ENCODE measurements at regions of chr20 and their contacts with region 1.

Region 1: DNA sequence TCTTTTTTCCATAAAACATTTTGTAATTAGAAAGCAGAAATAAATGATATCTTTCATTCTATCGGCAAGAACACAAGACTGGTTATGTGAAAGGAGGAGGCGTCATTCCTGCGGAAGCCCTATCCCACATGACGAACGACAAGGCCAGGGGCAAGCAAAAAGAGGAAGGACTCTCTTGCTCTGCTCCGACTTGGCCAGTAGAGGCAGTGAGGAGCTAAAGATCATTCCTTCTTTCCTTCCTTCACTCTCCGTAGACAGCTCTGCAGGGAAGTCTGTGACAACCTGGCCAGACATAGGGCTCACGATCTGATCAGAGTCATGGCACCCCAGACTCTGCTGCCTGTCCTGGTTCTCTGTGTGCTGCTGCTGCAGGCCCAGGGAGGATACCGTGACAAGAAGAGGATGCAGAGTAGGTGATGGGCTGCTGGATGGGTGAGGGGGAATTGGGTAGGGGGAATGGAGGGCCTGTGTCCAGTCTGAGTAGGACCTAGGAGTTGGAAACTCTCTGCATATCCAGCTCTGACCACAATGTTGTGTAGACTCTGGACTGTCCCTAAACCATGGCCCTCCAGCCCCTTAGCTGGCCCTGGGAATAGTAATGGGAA is at the start of gene WFDC10A:
- DNase-seq: no peak
- H3K4me3 ChIP-seq: no peak within 1 kb of the TSS
- H3K27ac ChIP-seq: no peak within 1 kb of the TSS
- H3K4me1 ChIP-seq: no peaks in the 10 kb centered on the region
- H3K27me3 ChIP-seq: no peaks in the 10 kb centered on the region
- CTCF ChIP-seq: peak in 2 of 3 donors; percentile 52 to 56
- POLR2A ChIP-seq: no peak
- total RNA-seq, gene WFDC10A: not detected

Region 2: GRCh38 chr20:45378191-45378590 is 251.4 kb before region 1 on chr20 and contains the start of gene TP53TG5:
- intact Hi-C with region 1: no loop called
- DNase-seq: no peak
- H3K4me3 ChIP-seq: no peak within 1 kb of the TSS
- H3K27ac ChIP-seq: peak within 1 kb of the TSS in 1 of 2 donors; percentile 21
- H3K4me1 ChIP-seq: no peaks in the 10 kb centered on the region
- H3K27me3 ChIP-seq: no peaks in the 10 kb centered on the region
- CTCF ChIP-seq: no peak
- POLR2A ChIP-seq: no peak
- total RNA-seq, gene TP53TG5: 1.3 TPM in 1 of 3 donors, not detected in the others

Region 3: DNA sequence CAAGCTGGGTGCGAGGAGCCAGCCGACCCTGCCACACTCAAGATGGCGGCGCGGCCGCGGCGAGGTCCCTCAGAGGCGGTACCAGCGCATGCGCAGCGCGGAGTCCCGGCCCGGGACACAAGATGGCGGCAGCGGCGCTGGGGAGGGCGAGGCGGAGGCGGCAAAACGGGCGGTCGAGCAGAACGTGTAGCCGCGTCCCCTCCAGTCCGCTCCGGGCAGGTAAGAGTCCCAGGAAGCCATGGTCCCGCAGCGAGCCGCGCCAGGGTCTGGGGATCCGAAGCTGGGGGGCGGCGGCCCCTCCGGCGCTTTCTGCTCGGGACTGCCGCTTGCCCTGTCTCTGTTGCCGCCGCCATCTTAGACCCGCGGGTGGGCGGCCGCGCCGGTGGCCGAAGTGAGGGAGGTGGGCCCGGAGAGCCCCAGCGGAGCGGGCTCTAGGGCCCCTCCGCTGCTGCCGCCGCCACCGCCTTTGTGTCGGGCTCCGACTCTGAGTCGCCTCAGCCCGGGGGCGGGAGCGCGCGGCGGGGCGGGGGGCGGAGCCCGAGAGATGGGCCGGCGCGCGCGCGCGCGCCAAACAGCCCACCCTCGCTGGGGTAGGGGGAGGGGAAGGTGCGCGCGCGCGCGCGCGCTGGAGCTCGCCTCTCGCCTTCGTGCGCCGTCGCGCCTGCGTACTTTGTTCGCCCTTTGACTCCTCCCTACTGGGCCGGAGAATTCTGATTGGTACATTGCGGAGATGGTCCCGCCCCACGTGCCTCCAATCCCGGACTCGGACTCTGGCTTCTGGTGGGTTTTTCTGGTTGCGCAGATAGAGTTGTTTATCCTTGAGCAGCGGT is 305.2 kb after region 1 on chr20 and contains the start of gene PCIF1:
- intact Hi-C with region 1: no loop called
- DNase-seq: peak; percentile 97
- H3K4me3 ChIP-seq: peak within 1 kb of the TSS; percentile 81 to 100 (median 98)
- H3K27ac ChIP-seq: peak within 1 kb of the TSS; percentile 100
- H3K4me1 ChIP-seq: no peaks in the 10 kb centered on the region
- H3K27me3 ChIP-seq: no peaks in the 10 kb centered on the region
- CTCF ChIP-seq: peak in 2 of 3 donors; percentile 25 to 30
- POLR2A ChIP-seq: peak; percentile 96
- total RNA-seq, gene PCIF1: 28.2 to 40.2 (median 30.8) TPM

Region 4: DNA sequence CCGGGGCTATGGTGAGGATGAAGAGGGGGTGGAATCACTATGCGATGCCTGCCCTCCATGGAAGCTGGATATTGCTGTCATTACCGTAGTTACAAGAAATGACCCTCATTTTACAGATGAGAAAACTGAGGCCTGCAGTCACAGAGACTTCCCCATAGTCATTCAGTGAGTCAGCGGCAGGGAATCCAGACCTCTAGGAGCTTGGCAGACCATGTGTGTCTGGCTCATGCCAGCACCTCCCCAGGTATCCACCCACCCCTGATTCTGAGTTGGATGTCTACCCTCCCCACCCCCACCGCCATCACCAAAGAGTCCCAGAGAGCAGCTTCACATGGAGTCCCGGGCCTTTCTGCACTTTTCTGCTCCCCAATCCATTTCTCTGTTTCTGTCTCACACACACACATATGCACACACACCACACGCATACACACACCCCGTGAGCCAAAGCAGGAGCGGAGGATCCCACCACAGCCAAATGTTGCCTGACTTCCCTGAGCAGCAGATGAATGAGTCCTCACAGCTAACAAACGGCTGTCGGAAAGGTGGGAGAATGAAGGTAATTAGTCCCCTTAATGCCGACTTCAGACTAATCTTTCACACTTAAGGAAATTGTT is 653.9 kb after region 1 on chr20:
- intact Hi-C with region 1: loop called (anchors 5 kb)
- DNase-seq: no peak
- H3K4me3 ChIP-seq: no peak overlapping the region
- H3K27ac ChIP-seq: no peak overlapping the region
- H3K4me1 ChIP-seq: no peaks in the 10 kb centered on the region
- H3K27me3 ChIP-seq: peaks cover 0 to 78% of the 10 kb centered on the region in 2 donors
- CTCF ChIP-seq: no peak
- POLR2A ChIP-seq: no peak

Measured in breast epithelium (tissue), 4 donors.